K562 (cell line): ENCODE measurements at regions of chr19 and their contacts with region 1.

Region 1: DNA sequence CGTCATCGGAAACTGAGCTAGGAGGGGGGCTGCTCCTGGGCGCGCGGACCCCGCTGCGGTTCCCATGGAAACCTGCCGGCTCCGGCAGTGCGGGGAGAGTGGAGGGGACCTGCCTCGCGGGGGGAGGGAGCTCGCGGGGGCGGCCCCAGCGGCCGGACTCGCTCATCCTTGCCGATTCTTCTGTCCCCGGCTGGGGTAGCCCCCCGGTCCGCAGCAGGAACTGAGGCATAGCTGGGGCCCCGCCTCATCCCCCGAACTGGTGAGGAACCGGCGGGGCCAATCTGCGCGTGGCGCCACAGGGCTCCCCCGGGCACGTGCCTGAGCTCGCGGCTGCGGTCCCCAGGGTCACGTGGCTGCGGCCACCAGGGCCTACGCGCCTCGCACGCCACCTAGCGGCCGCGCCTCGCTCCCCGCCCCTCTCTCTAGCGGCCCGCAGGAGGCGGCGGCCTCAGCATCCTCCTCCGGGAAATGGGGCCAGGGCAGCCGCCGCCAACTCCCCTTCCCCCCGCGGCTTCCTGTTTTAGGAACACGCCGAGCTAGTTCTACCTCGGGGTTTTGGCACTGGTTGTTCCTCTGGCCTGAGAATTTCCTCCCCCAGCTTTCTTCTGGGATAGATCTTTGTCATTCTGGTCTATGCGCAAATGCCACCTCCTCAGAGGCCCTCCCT is 1.7 kb upstream of the ELAVL3 start:
- DNase-seq: peak; percentile 90 to 93 (median 92)
- ATAC-seq: peak; percentile 88
- H3K4me3 ChIP-seq: peak overlapping the region; percentile 39
- H3K27ac ChIP-seq: peak overlapping the region; percentile 40; the same call in 1 of the 3 replicates
- H3K4me1 ChIP-seq: peaks cover 9 to 70% of the 10 kb centered on the region in 2 experiments; a peak in 4 of 5 replicates
- H3K27me3 ChIP-seq: no peaks in the 10 kb centered on the region; a peak in 1 of 5 replicates
- CTCF ChIP-seq: peak; percentile 91 to 97 (median 95)
- EP300 ChIP-seq: peak; percentile 28; the same call in 1 of the 2 replicates
- POLR2A ChIP-seq: peak; percentile 55
- RAD21 ChIP-seq: peak; percentile 89 to 93

Region 2: GRCh38 chr19:11380653-11381534 is 101.6 kb before region 1 on chr19:
- CTCF ChIA-PET with region 1: interaction called, 3 read pairs
- POLR2A ChIA-PET with region 1: interaction called, 3 read pairs
- in situ Hi-C with region 1: no loop called
- intact Hi-C with region 1: loop called (anchors 5 kb)
- DNase-seq: peak in 3 of 4 experiments; percentile 61 to 65 (median 61)
- ATAC-seq: no peak
- H3K4me3 ChIP-seq: no peak overlapping the region
- H3K27ac ChIP-seq: no peak overlapping the region
- H3K4me1 ChIP-seq: peaks cover 16 to 57% of the 10 kb centered on the region in 2 experiments
- H3K27me3 ChIP-seq: no peaks in the 10 kb centered on the region
- CTCF ChIP-seq: no peak
- EP300 ChIP-seq: no peak
- POLR2A ChIP-seq: no peak
- RAD21 ChIP-seq: no peak

Region 3: DNA sequence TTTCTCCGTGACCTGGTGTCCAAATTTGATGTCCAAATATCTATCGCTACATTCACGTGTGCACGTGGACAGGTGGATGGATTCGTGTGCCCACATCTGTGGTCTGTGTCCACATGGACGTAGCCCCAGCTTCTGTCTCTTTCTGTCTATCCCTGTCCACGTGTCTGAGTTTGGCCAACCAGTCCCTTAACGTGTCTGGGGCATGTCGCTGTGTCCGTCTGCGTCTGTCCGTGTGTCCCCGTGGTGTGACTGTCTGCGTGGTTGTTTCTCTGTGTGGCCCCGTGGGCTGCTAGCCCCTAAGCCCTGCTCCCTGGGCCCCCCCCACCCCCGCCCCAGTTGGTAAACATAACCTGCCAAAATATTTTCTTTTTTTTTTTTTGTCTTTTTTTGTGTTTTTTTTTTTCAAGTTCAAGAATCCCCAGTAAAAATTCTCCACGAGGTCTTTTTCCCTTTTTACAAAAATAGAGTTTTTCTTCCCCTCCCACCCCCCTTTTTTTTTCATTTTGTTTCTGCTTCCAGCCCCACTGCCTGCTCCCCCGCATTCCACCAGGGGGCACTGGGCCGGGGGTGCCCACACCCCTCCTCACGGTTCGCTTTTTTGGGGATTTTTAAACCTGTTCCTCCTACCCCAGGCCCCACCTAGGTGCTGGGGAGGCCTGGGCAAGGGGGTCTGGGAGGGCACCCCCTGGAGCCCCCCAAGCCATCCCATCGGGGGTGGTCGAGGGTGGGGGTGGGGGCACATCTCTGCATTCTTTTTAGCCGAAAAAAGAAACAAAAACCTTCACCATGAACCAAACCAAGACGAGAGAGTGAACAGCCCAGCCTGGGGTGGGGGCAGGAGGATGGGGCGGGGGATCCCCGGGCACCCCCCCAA is 28.8 kb before region 1 on chr19:
- CTCF ChIA-PET with region 1: interaction called, 3 read pairs
- POLR2A ChIA-PET with region 1: interaction called, 3 read pairs
- in situ Hi-C with region 1: no loop called
- intact Hi-C with region 1: loop called (anchors 2 kb)
- DNase-seq: peak; percentile 37 to 73 (median 71)
- ATAC-seq: peak; percentile 66
- H3K4me3 ChIP-seq: no peak overlapping the region
- H3K27ac ChIP-seq: no peak overlapping the region
- H3K4me1 ChIP-seq: peaks cover 0 to 53% of the 10 kb centered on the region in 2 experiments; a peak in 3 of 5 replicates
- H3K27me3 ChIP-seq: peaks cover 0 to 9% of the 10 kb centered on the region in 2 experiments; a peak in 3 of 5 replicates
- CTCF ChIP-seq: peak; percentile 57 to 62 (median 61)
- EP300 ChIP-seq: no peak
- POLR2A ChIP-seq: no peak
- RAD21 ChIP-seq: peak in 1 of 2 experiments; percentile 24; a peak in 1 of 4 replicates

Region 4: GRCh38 chr19:11566164-11566563 is 83.6 kb after region 1 on chr19:
- CTCF ChIA-PET with region 1: no interaction called
- POLR2A ChIA-PET with region 1: no interaction called
- in situ Hi-C with region 1: no loop called
- intact Hi-C with region 1: no loop called
- DNase-seq: peak in 2 of 4 experiments; percentile 2 to 3
- ATAC-seq: no peak
- H3K4me3 ChIP-seq: no peak overlapping the region
- H3K27ac ChIP-seq: peak overlapping the region; percentile 66; the same call in 1 of the 3 replicates
- H3K4me1 ChIP-seq: peaks cover 54 to 62% of the 10 kb centered on the region in 2 experiments
- H3K27me3 ChIP-seq: no peaks in the 10 kb centered on the region
- CTCF ChIP-seq: no peak
- EP300 ChIP-seq: no peak
- POLR2A ChIP-seq: no peak
- RAD21 ChIP-seq: no peak